ENCODE measurements at regions of chr1 and their contacts with region 1.

Region 1: GRCh38 chr1:29550119-29550898 is 314.0 kb downstream of the PTPRU start:
- DNase-seq: no peak
- H3K4me3 ChIP-seq: no peak overlapping the region
- H3K27ac ChIP-seq: no peak overlapping the region
- H3K4me1 ChIP-seq: no peaks in the 10 kb centered on the region
- H3K27me3 ChIP-seq: peaks cover 7% of the 10 kb centered on the region
- CTCF ChIP-seq: no peak
- EP300 ChIP-seq: no peak
- POLR2A ChIP-seq: no peak

Region 2: DNA sequence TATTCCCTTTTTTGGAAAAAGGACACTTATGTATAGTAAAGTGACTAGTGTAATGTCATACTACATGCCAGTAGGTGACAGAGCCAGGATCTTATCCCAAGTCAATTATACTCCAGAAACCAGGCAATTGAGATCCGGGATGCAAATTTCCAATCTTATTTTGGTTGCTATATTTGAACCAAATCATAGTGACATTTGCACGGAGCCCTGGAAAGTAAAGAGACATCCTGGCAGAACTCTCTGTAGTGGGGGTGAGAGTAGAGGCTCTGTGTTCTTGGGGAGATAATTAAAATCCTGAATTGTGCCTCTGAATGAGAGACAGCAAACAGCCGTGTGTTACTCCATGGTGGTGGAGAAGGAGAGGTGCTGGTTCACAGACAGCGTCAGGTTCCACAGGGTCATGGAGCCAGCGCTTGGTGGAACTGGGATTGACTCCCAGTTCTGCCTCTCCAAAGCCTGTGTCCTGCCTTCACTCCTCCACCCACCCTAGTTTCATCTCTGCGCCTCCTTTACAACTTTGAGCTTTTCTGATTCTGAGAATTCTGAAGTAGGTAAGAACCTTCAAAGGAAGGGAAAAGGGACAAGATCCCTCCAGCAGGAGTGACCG is 118.3 kb after region 1 on chr1:
- in situ Hi-C with region 1: no loop called
- intact Hi-C with region 1: no loop called
- DNase-seq: no peak
- H3K4me3 ChIP-seq: no peak overlapping the region
- H3K27ac ChIP-seq: no peak overlapping the region
- H3K4me1 ChIP-seq: no peaks in the 10 kb centered on the region
- H3K27me3 ChIP-seq: peaks cover 22% of the 10 kb centered on the region
- CTCF ChIP-seq: no peak
- EP300 ChIP-seq: no peak
- POLR2A ChIP-seq: no peak

Region 3: DNA sequence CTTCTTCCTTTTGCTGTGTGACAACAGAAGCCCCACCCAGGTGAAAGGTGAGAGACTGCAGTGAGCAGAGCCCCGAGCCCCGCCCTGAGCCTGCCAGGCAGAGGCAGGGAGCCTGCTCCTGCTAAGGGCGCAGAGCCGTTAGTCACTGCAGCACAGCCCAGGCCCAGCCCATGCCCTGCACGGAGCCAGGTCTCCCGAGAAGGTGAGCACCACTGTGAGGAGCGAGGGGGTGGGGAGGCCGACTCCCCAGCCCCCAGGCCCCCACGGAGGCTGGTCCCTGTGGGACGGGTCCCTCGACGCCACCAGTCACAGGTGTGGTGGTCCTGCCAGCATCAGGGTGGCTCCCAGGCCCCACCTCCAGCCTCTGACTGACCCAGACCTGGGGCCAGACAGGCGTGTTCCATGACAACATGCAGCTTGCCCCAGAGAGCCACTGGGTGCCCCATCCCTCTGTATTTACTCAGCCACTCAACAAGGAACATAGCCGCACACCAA is 1107.5 kb after region 1 on chr1:
- in situ Hi-C with region 1: loop called in 2 of 4 experiments (anchors 5 kb)
- intact Hi-C with region 1: no loop called
- DNase-seq: peak; percentile 80
- H3K4me3 ChIP-seq: no peak overlapping the region
- H3K27ac ChIP-seq: peak overlapping the region in 2 of 4 donors; percentile 3 to 47
- H3K4me1 ChIP-seq: peaks cover 0 to 4% (median 2%) of the 10 kb centered on the region in 4 donors
- H3K27me3 ChIP-seq: peaks cover 6% of the 10 kb centered on the region
- CTCF ChIP-seq: no peak
- EP300 ChIP-seq: no peak
- POLR2A ChIP-seq: no peak